Colonic mucosa (tissue), 4 donors: ENCODE measurements at regions of chr11 and their contacts with region 1.

Region 1: DNA sequence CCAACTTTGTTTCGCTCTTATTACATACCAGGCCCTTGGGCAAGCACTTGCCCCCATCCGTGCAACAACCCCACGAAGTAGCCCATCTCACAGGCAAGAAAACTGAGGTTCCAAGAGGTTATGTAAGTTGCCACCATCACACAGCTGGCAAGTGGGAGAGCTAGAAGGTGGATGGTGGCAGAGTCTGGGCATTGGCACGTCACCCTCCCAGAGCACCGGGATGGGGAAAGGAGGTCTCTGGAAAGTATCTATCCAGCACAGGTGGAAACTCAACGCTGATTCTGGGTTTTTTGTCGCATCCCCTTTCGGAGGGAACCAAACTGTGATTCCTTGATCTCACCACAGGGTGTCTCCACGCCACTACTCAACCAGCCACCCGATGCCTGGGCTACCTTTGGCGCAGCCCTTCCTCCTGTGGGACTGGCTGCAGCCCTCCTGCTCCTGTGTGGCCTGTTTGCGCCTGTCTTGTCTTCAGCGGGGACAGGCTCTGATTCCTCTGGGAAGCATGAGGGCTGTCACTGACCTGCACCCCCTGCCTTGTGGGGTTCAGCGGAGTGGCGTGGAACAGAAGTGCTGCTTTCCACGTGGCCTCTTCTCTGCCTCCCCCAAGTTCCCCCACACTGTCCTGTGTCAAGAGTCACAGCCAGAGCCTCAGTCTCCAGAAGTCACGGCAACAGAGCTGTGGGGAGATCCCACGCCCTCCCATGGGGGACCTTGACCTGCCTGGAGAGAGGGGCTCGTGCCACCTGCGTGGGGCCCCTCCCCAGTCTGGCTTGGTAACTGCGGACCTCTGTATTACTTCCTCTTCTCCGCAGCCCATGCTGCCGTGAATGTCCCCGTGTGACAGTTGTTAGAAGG is 34.4 kb upstream of the TRIM29 start:
- DNase-seq: peak; percentile 71
- H3K4me3 ChIP-seq: no peak overlapping the region
- H3K27ac ChIP-seq: no peak overlapping the region
- H3K4me1 ChIP-seq: peaks cover 3% of the 10 kb centered on the region
- H3K27me3 ChIP-seq: peaks cover 6% of the 10 kb centered on the region
- CTCF ChIP-seq: peak; percentile 81

Region 2: GRCh38 chr11:120128782-120129172 is 43.5 kb before region 1 on chr11:
- intact Hi-C with region 1: no loop called
- DNase-seq: peak; percentile 90
- H3K4me3 ChIP-seq: no peak overlapping the region
- H3K27ac ChIP-seq: peak overlapping the region; percentile 44
- H3K4me1 ChIP-seq: no peaks in the 10 kb centered on the region
- H3K27me3 ChIP-seq: no peaks in the 10 kb centered on the region
- CTCF ChIP-seq: no peak

Region 3: GRCh38 chr11:120229451-120230424 is 57.5 kb after region 1 on chr11:
- intact Hi-C with region 1: loop called (anchors 1 kb)
- DNase-seq: no peak
- H3K4me3 ChIP-seq: no peak overlapping the region
- H3K27ac ChIP-seq: no peak overlapping the region
- H3K4me1 ChIP-seq: peaks cover 3% of the 10 kb centered on the region
- H3K27me3 ChIP-seq: no peaks in the 10 kb centered on the region
- CTCF ChIP-seq: peak; percentile 43

Region 4: DNA sequence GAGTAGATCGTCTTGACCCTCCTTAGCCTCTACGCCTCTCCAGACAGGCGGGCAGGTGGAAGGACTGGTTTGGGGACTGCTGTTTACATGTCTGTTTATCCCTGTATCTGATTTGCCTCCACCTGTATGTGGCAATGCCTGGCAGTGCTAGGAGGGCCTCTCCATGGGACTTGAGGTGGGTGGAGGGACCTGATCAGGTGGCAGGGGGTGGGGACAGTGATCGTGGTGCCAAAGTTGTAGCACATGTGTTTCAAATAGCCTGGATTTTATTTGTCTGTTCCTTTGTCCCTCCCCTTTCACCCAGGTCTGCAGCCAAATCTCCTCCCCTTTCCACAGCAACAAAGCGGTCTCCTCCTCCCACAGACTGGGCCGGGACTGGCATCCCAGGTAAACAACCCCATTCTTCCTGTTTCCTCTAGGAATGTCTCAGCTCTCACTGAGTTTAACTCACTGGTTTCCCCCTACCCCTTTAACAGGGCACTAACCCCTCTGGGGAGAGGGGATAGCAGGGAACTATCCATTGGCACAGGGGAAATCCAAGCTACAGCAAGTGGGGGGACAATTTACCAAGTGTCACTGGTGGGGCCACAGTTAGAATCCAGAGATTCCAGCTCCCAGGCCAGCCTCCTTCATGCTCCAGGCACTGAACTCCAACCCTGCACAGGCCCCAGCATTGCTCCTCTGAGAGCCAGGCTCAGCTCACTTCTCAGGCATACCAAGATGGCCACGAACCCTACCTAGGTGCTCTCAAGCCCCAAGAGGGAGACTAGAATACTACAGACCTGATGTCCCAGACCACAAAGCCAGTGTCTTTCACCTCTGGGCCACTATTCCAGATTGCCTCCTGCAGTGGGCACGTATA is 129.9 kb after region 1 on chr11:
- intact Hi-C with region 1: loop called (anchors 2 kb)
- DNase-seq: peak; percentile 77
- H3K4me3 ChIP-seq: no peak overlapping the region
- H3K27ac ChIP-seq: peak overlapping the region; percentile 47
- H3K4me1 ChIP-seq: no peaks in the 10 kb centered on the region
- H3K27me3 ChIP-seq: no peaks in the 10 kb centered on the region
- CTCF ChIP-seq: no peak